Right ventricle myocardium inferior (tissue), 1 donor: ENCODE measurements at regions of chr6 and their contacts with region 1.

Region 1: GRCh38 chr6:34295721-34296120 is 46.9 kb upstream of the SMIM29 start:
- DNase-seq: no peak
- ATAC-seq: no peak

Region 2: GRCh38 chr6:34332251-34333198 is 36.8 kb after region 1 on chr6:
- intact Hi-C with region 1: loop called (anchors 5 kb)
- DNase-seq: no peak
- ATAC-seq: no peak

Region 3: GRCh38 chr6:34514593-34515472 is 219.1 kb after region 1 on chr6:
- intact Hi-C with region 1: no loop called
- DNase-seq: no peak
- ATAC-seq: peak; percentile 18